MCF 10A (cell line): ENCODE measurements at regions of chr15 and their contacts with region 1.

Region 1: GRCh38 chr15:88246666-88247446 is 9.7 kb downstream of the NTRK3 start:
- DNase-seq: peak; percentile 62
- H3K4me3 Mint-ChIP-seq: no peak overlapping the region
- H3K27ac Mint-ChIP-seq: no peak overlapping the region
- H3K4me1 Mint-ChIP-seq: peaks cover 5% of the 10 kb centered on the region
- H3K27me3 Mint-ChIP-seq: no peaks in the 10 kb centered on the region
- CTCF ChIP-seq: peak; percentile 81

Region 2: GRCh38 chr15:87038404-87038803 is 1208.5 kb before region 1 on chr15:
- CTCF ChIA-PET with region 1: interaction called, 11 read pairs
- POLR2A ChIA-PET with region 1: no interaction called
- intact Hi-C with region 1: no loop called
- DNase-seq: no peak
- H3K4me3 Mint-ChIP-seq: no peak overlapping the region
- H3K27ac Mint-ChIP-seq: no peak overlapping the region
- H3K4me1 Mint-ChIP-seq: no peaks in the 10 kb centered on the region
- H3K27me3 Mint-ChIP-seq: no peaks in the 10 kb centered on the region
- CTCF ChIP-seq: no peak

Region 3: DNA sequence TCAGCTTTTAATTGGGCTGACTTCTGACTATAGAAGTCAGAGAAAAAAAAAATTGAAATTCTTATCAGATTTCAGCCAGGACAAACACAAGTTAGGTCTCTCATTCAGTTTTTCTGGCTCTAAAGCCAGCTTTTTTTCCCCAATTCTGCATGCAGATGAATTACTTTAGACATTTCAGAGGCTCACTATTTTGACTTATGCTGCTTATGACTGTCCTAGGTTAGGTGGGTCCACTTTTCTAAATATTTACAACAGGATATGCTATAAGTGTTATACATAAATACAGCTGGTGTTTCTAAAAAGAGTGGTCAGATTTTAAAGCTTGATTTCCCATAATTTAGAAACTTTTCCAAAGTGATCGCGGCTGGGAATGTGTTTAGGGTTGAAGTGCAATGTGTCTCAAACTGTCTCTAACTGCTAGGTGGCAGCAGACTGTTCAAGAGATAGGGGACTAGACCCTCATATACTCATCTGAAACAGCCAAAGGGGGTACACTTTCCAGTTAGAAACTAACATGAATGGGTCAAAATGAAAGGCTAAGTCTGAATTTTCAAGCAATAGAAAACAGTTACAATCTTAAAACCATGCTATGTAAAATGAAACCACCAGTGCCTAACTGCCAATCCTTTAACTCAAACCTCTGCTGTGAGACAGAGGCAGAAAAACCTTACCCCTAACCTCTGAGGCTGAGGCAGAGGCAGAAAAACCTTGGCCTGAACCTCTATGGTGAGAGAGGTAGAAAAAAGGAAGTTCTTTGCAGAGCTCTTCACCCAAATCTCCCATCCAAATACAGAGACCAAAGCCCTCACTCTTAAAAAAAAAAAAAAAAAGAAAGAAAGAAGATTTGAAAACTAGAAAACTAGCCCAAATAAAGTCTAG is 586.4 kb before region 1 on chr15:
- CTCF ChIA-PET with region 1: no interaction called
- POLR2A ChIA-PET with region 1: no interaction called
- intact Hi-C with region 1: loop called (anchors 10 kb)
- DNase-seq: no peak
- H3K4me3 Mint-ChIP-seq: no peak overlapping the region
- H3K27ac Mint-ChIP-seq: peak overlapping the region; percentile 19
- H3K4me1 Mint-ChIP-seq: peaks cover 25% of the 10 kb centered on the region
- H3K27me3 Mint-ChIP-seq: no peaks in the 10 kb centered on the region
- CTCF ChIP-seq: no peak

Region 4: DNA sequence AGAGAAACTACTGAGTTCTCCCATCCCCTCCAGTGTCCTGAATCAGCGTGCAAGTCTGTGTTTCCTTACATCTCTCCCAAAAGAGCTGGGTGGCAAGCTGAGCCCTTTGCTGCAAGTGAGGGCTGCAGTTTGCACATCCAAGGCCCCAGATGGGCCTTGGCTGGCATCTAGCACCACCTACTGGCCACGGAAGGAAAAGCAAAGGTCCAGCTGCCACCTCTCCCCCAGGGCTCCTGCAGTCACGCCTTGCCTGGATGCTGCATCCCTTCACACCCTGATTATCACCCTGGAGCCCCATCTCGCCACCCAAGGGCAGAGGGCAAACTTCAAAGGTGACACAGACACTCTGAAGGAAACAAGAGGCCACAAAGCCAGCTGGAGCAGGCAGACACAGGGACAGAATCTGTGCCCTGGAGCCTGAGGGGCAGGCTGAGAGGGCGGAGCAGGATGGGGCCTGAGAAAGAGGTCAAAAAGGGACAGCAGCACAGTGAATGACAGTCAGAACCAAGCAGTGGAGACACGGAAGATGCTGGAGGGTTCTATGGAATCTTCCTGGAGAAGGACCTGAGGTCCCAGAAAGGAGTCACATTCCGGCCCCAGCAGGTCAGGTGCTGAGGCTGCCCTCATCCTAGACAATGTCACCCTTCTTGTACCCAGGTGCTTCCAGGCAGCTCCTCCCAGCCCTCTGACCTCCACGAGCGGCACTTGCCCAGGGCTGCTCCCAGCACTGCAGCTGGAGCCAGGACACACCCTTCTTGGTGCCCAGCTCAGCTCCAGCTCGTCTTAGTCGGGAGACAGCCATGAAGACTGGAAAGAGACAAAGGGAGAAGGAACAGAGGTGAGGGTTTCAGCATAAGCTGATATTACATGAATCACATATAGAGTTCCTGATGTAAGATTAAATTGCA is 28.0 kb after region 1 on chr15:
- CTCF ChIA-PET with region 1: interaction called, 22 read pairs
- POLR2A ChIA-PET with region 1: no interaction called
- intact Hi-C with region 1: no loop called
- DNase-seq: peak; percentile 23
- H3K4me3 Mint-ChIP-seq: no peak overlapping the region
- H3K27ac Mint-ChIP-seq: no peak overlapping the region
- H3K4me1 Mint-ChIP-seq: no peaks in the 10 kb centered on the region
- H3K27me3 Mint-ChIP-seq: peaks cover 13% of the 10 kb centered on the region
- CTCF ChIP-seq: peak; percentile 85

Region 5: DNA sequence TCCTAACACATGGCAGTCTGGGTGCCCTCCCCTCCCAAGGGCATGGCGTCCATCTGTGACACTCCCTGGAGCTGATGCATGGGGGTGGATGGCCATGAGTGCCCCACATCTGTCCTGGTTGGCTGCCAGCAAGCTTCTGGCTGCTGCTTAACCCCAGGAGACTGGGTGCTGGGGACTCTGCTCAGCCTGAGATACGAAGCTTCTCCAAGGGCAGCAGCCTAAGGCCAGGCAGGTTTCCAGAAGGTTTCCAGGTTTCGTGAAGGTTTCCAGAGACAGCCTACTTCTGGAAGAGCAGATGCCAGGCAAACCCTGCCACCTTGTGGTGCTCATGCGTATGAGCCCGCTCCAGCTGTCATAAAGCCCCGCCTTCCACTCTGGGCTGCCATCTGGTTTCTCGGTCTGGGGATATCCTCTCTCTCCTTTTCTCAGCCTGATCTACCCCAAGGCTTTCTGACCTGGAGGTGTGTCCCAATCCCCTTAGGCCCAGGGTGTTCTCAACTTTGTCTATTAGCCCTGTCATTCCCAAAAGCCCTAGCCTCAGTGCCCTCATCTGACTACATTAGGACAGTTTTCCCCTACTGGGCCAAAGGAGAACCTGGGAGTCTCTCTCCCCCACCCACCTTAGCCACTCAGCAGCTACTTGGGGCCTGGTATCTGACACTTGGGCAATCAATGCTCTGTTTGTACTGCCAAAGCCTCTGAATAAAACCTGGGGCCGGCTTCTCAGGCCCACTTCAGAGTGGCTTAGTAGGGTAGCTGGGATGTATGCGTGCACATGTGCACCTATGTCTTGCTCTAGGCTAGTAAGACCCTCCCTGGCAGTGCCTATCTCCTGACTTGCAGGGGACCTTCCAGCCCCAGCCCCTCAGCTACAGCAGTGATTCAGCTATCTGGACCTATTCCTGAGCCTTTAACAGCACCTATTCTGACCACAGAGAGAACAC is 208.3 kb after region 1 on chr15:
- CTCF ChIA-PET with region 1: interaction called, 24 read pairs
- POLR2A ChIA-PET with region 1: no interaction called
- intact Hi-C with region 1: loop called (anchors 2 kb)
- DNase-seq: peak; percentile 73
- H3K4me3 Mint-ChIP-seq: no peak overlapping the region
- H3K27ac Mint-ChIP-seq: no peak overlapping the region
- H3K4me1 Mint-ChIP-seq: peaks cover 1% of the 10 kb centered on the region
- H3K27me3 Mint-ChIP-seq: no peaks in the 10 kb centered on the region
- CTCF ChIP-seq: peak; percentile 58